ENCODE measurements at regions of chr10 and their contacts with region 1.

Region 1: GRCh38 chr10:104353325-104354048 is at the start of gene CFAP58:
- DNase-seq: peak; percentile 96
- ATAC-seq: peak; percentile 94
- H3K4me3 Mint-ChIP-seq: no peak within 1 kb of the TSS
- H3K27ac Mint-ChIP-seq: peak within 1 kb of the TSS; percentile 82
- H3K4me1 Mint-ChIP-seq: peaks cover 10% of the 10 kb centered on the region
- H3K27me3 Mint-ChIP-seq: no peaks in the 10 kb centered on the region
- total RNA-seq, gene CFAP58: 0.56 to 0.64 TPM

Region 2: DNA sequence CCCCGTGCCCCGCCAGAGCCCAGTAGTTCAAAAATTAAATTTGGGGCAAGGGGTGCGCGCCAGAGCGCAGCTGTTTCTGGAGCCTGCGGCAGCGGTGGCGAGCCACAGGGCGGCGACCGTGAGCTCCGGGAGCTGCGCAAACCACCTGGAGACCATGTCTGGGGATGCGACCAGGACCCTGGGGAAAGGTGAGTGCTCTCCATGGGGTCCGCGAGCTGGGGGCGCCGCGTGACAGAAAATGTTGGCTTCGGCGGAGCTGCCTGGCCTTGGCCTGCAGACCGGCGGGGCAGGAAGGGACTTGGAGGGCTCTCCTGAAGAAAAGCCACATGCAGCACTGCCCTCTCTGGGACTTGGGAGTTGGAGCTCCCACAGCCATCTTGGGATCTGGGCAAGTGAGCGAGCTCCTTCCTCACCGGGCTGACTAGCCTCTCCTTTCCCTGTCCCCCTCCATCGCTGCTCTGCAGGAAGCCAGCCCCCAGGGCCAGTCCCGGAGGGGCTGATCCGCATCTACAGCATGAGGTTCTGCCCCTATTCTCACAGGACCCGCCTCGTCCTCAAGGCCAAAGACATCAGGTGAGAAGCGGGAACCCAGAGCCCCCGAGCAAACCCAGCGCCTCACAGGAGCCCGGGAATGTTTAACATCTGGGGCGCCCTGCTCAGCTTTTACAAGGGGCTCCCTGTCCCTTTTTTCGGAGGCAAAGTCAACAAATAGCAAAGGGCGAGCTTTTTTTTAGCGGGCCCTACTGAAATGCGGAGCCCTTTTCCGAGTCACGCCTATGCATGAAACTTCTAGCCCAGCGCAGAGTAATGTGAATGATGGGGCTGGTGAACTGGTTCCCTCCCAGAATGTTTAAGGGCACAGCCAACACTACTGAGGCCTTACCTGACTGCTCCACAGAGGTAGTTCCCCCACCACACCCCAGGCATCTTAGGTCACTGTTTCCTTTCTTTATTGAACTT is 78.4 kb before region 1 on chr10:
- CTCF ChIA-PET with region 1: interaction called, 57 read pairs
- DNase-seq: peak; percentile 53
- ATAC-seq: peak; percentile 80
- H3K4me3 Mint-ChIP-seq: peak overlapping the region; percentile 52
- H3K27ac Mint-ChIP-seq: no peak overlapping the region
- H3K4me1 Mint-ChIP-seq: peaks cover 7% of the 10 kb centered on the region
- H3K27me3 Mint-ChIP-seq: peaks cover 24% of the 10 kb centered on the region

Region 3: GRCh38 chr10:104300736-104301292 is 52.7 kb before region 1 on chr10:
- CTCF ChIA-PET with region 1: interaction called, 290 read pairs
- DNase-seq: no peak
- ATAC-seq: peak; percentile 48
- H3K4me3 Mint-ChIP-seq: no peak overlapping the region
- H3K27ac Mint-ChIP-seq: peak overlapping the region; percentile 6
- H3K4me1 Mint-ChIP-seq: peaks cover 24% of the 10 kb centered on the region
- H3K27me3 Mint-ChIP-seq: no peaks in the 10 kb centered on the region

Region 4: DNA sequence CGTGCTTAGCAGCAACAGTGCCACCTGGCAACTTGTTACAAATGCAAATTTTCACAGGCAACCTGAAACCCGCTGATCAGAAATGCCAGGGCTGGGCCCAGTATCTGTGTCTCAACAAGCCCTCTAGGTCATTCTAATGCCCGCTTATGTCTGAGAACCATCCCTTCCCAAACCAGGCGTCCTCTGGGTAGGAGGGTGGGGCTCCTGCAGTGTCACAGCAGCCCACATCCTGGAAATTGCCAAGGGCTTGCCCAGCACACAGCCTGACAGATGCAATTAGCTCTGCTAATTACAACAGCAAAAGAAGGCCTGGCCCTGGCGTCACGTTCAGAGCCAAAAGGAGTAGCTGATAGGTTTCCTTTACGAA is 31.1 kb before region 1 on chr10:
- CTCF ChIA-PET with region 1: interaction called, 13 read pairs
- DNase-seq: peak; percentile 74
- ATAC-seq: peak; percentile 69
- H3K4me3 Mint-ChIP-seq: peak overlapping the region; percentile 45
- H3K27ac Mint-ChIP-seq: peak overlapping the region; percentile 84
- H3K4me1 Mint-ChIP-seq: peaks cover 66% of the 10 kb centered on the region
- H3K27me3 Mint-ChIP-seq: no peaks in the 10 kb centered on the region

Region 5: GRCh38 chr10:104337974-104338735 is 15.3 kb before region 1 on chr10 and contains the start of gene ITPRIP:
- CTCF ChIA-PET with region 1: interaction called, 64 read pairs
- DNase-seq: peak; percentile 84
- ATAC-seq: peak; percentile 80
- H3K4me3 Mint-ChIP-seq: peak within 1 kb of the TSS; percentile 95
- H3K27ac Mint-ChIP-seq: peak within 1 kb of the TSS; percentile 100
- H3K4me1 Mint-ChIP-seq: peaks cover 50% of the 10 kb centered on the region
- H3K27me3 Mint-ChIP-seq: peaks cover 9% of the 10 kb centered on the region
- total RNA-seq, gene ITPRIP: 21.6 to 21.9 TPM

Measured in activated CD8-positive, alpha-beta memory T cell treated with anti-CD3 and anti-CD28 coated beads, Interleukin-2, amount 10 ng/mL, durations not matched to agents 7 days and 5 days (primary cell).